Heart left ventricle (tissue), 16 donors: ENCODE measurements at regions of chr3 and their contacts with region 1.

Region 1: DNA sequence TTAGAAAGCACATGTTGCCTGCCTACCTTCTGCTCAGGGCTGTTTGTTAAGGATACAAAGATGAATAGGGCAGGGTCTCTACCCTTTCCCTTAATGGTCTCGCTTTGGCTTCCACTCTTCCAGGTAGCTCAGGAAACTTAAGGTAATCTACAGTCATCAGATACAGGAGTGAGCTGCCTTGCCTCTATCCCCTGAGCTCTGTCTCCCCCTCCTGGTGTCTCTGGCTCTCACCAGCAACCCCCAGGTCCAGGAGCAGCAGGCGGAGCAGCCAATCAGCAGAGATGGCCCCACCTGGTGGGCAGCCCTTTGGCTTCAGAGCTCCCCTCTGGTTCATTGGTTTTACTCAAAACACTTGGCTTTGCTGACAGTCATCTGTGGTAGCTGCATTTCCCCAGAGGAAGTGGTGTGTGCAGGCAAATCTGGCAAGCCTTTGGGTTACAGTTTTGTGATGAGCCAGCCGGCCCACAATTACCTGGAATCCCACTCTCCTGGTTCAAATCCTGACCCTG is 8.5 kb upstream of the CX3CR1 start:
- DNase-seq: peak; percentile 76 to 85 (median 78)
- ATAC-seq: peak; percentile 87 to 97 (median 94)
- H3K4me3 ChIP-seq: no peak overlapping the region
- H3K27ac ChIP-seq: no peak overlapping the region
- H3K4me1 ChIP-seq: peaks cover 0 to 17% (median 0%) of the 10 kb centered on the region in 12 donors
- H3K27me3 ChIP-seq: no peaks in the 10 kb centered on the region
- CTCF ChIP-seq: peak; percentile 79 to 96 (median 92)
- POLR2A ChIP-seq: no peak

Region 2: DNA sequence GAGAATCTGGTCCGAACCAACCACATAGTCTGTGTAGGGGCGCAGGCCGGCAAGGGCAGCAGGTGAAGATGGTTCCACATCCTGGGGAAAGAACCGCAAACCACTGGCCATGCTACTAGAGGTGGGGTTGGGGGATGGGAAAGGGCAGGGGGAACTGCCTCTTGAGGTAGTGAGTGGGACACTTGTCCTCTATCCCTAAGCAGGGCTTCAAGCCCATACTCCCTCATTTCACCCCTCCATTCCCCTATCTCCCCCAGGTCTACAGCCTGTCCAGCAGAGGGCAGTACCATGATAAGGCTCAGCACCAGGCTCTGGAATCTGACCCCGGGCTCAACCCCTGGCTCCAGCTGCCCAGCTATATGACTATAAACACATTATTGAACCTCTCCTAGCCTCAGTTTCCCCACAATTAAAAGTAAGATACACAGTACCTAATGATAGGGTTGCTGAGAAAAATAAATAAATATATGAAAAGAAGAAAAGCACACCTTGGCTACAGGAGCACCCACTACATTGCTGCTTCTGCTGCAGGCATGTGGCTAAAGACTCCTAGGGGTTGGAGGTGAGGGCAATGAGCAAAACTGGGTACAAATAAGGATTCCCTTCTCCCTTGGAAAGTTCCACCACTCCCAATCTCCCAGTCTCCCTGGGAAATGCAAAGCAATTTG is 187.2 kb before region 1 on chr3:
- intact Hi-C with region 1: loop called in 4 of 10 experiments (anchors 1 to 5 kb)
- DNase-seq: no peak
- ATAC-seq: peak in 3 of 4 donors; percentile 41 to 54 (median 44)
- H3K4me3 ChIP-seq: no peak overlapping the region
- H3K27ac ChIP-seq: no peak overlapping the region
- H3K4me1 ChIP-seq: peaks cover 6 to 56% (median 43%) of the 10 kb centered on the region in 12 donors
- H3K27me3 ChIP-seq: no peaks in the 10 kb centered on the region
- CTCF ChIP-seq: peak; percentile 42 to 66 (median 52)
- POLR2A ChIP-seq: no peak

Region 3: GRCh38 chr3:39126532-39127071 is 161.8 kb before region 1 on chr3:
- intact Hi-C with region 1: loop called (anchors 1 to 5 kb)
- DNase-seq: peak in 2 of 5 donors; percentile 45 to 69
- ATAC-seq: peak; percentile 62 to 85 (median 79)
- H3K4me3 ChIP-seq: no peak overlapping the region
- H3K27ac ChIP-seq: no peak overlapping the region
- H3K4me1 ChIP-seq: peaks cover 0 to 17% (median 3%) of the 10 kb centered on the region in 12 donors
- H3K27me3 ChIP-seq: no peaks in the 10 kb centered on the region
- CTCF ChIP-seq: peak; percentile 45 to 77 (median 62)
- POLR2A ChIP-seq: no peak

Region 4: GRCh38 chr3:39189959-39190269 is 98.4 kb before region 1 on chr3:
- intact Hi-C with region 1: loop called (anchors 1 to 5 kb)
- DNase-seq: peak in 4 of 5 donors; percentile 69 to 80 (median 78)
- ATAC-seq: peak; percentile 15 to 40 (median 30)
- H3K4me3 ChIP-seq: peak overlapping the region; percentile 9 to 72 (median 61)
- H3K27ac ChIP-seq: peak overlapping the region; percentile 41 to 99 (median 92)
- H3K4me1 ChIP-seq: peaks cover 0 to 71% (median 28%) of the 10 kb centered on the region in 12 donors
- H3K27me3 ChIP-seq: no peaks in the 10 kb centered on the region
- CTCF ChIP-seq: peak; percentile 64 to 82 (median 78)
- POLR2A ChIP-seq: no peak

Region 5: GRCh38 chr3:39208463-39209055 is 79.8 kb before region 1 on chr3:
- intact Hi-C with region 1: loop called in 9 of 10 experiments (anchors 1 to 5 kb)
- DNase-seq: peak in 4 of 5 donors; percentile 65 to 72 (median 68)
- ATAC-seq: peak; percentile 85 to 95 (median 92)
- H3K4me3 ChIP-seq: no peak overlapping the region
- H3K27ac ChIP-seq: peak overlapping the region in 6 of 12 donors; percentile 16 to 51 (median 36)
- H3K4me1 ChIP-seq: peaks cover 0 to 17% (median 5%) of the 10 kb centered on the region in 12 donors
- H3K27me3 ChIP-seq: no peaks in the 10 kb centered on the region
- CTCF ChIP-seq: peak; percentile 53 to 81 (median 65)
- POLR2A ChIP-seq: no peak

Region 6: DNA sequence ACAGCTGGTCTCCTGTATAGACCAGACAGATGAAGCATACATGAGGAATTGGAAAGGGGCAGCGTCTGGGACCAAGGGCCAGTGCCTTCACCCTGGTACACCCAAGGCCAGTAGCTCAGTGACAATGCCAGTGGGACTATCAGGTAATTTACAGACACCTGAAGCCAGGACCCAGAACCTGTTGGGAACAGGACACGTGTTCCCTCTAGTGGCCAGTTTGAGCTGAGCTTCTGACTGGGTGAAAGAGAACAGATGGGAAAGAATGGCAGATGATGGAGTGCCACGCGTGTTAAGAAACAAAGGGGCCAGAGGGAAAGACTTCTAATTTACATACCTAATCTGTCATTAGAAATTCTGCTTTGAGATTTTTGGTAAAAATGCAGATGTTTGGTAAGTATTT is 89.7 kb after region 1 on chr3:
- intact Hi-C with region 1: loop called in 1 of 10 experiments (anchors 10 kb)
- DNase-seq: no peak
- ATAC-seq: peak in 3 of 4 donors; percentile 46 to 61 (median 51)
- H3K4me3 ChIP-seq: no peak overlapping the region
- H3K27ac ChIP-seq: no peak overlapping the region
- H3K4me1 ChIP-seq: peaks cover 0 to 7% (median 0%) of the 10 kb centered on the region in 12 donors
- H3K27me3 ChIP-seq: peaks cover 0 to 18% (median 0%) of the 10 kb centered on the region in 9 donors
- CTCF ChIP-seq: peak; percentile 29 to 64 (median 46)
- POLR2A ChIP-seq: no peak